ENCODE measurements at regions of chr13 and their contacts with region 1.

Region 1: DNA sequence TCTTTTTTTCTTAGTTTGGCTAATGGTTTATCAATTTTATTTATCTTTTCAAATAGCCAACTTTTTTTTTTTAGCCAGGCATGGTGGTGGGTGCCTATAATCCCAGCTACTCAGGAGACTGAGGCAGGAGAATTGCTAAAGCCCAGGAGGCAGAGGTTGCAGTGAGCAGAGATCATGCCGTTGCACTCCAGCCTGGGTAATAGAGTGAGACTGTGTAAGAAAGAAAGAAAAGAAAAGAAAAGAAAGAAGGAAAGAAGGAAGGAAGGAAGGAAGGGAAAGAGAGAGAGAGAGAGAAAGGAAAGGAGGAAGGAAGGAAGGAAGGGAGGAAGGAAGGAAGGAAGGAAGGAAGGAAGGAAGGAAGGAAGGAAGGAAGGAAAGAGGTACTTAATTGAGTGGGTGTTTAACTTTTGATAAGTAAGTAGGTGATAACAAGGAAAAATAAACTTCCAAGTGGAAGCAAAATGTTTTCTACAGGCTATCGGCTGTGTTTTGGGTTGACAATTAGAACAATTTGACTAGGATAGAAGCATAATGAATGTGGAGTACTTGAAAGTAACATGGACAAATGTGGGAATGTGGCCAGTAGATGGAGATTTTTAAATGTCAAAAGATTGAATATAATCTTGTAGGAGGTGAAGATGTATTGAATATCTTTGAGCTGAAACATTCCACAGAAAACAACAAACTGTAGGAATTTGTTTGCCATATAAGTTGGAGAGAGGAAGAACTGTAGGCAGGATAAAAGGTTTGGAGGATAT is 62.8 kb upstream of the MYO16 start:
- DNase-seq: peak; percentile 61
- H3K4me3 ChIP-seq: no peak overlapping the region
- H3K27ac ChIP-seq: peak overlapping the region; percentile 58
- H3K4me1 ChIP-seq: peaks cover 7% of the 10 kb centered on the region
- H3K27me3 ChIP-seq: no peaks in the 10 kb centered on the region
- CTCF ChIP-seq: no peak

Region 2: DNA sequence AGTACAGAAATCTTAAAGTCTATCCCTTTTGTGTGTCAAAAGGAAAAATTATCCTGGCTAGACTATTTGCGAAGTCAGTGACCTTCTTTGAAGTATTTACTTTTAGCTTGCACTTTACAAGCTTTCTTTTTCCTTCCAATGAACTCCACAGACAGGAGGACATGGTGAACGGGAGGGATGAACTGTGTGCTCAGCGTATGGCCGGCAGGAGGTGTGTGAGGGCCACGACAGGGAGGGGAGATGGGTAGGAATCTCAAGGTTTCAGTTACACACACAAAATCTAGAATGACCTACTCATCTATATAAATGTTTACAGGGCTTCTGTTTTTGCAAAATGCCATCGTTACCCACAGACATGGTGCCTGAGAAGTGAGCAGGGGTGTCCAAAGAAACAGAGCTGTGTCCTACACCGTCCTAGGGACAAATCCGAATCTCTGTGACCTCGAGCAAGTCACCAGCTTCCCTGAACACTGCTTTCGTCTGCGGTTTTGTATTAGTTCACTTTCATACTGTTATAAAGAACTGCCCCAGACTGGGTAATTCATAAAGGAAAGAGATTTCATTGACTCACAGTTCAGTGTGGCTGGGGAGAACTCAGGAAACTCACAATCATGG is 888.4 kb before region 1 on chr13:
- CTCF ChIA-PET with region 1: no interaction called
- POLR2A ChIA-PET with region 1: no interaction called
- intact Hi-C with region 1: no loop called
- DNase-seq: no peak
- H3K4me3 ChIP-seq: no peak overlapping the region
- H3K27ac ChIP-seq: no peak overlapping the region
- H3K4me1 ChIP-seq: no peaks in the 10 kb centered on the region
- H3K27me3 ChIP-seq: no peaks in the 10 kb centered on the region
- CTCF ChIP-seq: no peak

Region 3: DNA sequence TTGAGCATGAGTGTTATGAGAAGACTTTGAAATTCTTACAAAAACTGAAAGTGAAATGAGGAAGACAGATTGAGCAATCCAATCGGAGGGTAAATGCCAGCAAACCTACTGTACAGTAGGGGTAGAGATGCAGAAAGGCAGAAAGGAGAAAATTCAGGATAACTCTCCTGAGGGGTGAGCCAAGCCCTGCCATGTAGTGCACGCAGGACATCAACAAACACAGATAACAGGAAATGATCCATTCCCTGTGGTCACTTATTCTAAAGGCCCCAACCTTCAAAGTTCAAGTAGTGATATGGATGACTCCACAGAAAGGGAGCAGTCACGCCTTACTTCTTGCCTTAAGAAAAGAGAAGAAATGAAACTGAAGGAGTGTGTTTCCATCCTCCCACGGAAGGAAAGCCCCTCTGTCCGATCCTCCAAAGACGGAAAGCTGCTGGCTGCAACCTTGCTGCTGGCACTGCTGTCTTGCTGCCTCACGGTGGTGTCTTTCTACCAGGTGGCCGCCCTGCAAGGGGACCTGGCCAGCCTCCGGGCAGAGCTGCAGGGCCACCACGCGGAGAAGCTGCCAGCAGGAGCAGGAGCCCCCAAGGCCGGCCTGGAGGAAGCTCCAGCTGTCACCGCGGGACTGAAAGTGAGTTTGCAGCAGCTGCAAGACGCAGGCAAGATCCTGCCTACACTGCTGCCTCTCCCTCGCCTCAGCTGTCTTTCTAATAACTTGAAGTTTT is 296.8 kb before region 1 on chr13 and contains the start of gene TNFSF13B:
- CTCF ChIA-PET with region 1: no interaction called
- POLR2A ChIA-PET with region 1: no interaction called
- intact Hi-C with region 1: loop called (anchors 1 kb)
- DNase-seq: peak; percentile 62
- H3K4me3 ChIP-seq: peak within 1 kb of the TSS; percentile 41
- H3K27ac ChIP-seq: peak within 1 kb of the TSS; percentile 84
- H3K4me1 ChIP-seq: peaks cover 59% of the 10 kb centered on the region
- H3K27me3 ChIP-seq: no peaks in the 10 kb centered on the region
- CTCF ChIP-seq: peak; percentile 34; the same call in 1 of the 2 replicates
- total RNA-seq, gene TNFSF13B: 9.2 and 11.2 TPM in 2 replicates